ENCODE measurements at regions of chr14 and their contacts with region 1.

Region 1: DNA sequence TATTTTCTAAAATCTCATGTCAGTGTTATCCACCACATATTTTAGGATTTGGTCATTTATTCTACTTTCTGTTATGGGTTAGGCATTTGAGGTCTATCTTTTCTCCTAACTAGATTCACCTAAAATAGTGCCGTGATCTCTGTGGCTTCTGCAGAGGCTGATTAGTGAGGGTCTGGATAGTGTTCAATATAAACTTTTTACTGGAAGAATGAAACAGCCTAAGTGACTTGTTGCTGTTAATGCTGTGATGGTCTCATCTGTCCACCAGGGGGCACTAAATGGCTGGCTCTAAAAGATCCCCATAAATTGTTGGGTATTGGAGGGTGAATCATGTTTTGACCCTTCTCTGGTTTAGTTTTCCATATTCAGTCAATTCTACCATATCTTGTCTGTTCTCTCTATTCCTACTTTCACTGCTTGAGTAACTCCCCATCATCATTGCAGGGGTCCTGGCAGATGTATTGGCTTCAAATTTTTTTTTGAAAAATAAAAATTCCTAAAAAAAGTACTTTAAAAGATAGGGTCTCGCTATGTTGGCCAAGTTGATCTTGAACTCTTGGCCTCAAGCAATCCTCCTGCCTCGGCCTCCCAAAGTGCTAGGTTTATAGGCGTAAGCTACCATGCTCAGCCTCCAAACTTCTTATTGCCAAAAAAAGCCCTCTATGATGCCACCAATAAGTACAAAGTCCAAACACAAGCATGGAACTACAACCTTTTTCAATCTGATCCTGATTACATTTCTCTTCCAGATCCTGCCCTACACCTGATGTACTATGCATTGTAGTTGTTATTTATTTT is 6.9 kb downstream of the PABPN1 start:
- H3K4me3 ChIP-seq: no peak overlapping the region
- H3K27ac ChIP-seq: no peak overlapping the region
- H3K4me1 ChIP-seq: peaks cover 4% of the 10 kb centered on the region; the same call in 1 of the 2 replicates
- CTCF ChIP-seq: peak; percentile 49

Region 2: GRCh38 chr14:23245282-23245681 is 82.9 kb before region 1 on chr14:
- CTCF ChIA-PET with region 1: no interaction called
- POLR2A ChIA-PET with region 1: no interaction called
- H3K4me3 ChIP-seq: no peak overlapping the region
- H3K27ac ChIP-seq: no peak overlapping the region
- H3K4me1 ChIP-seq: no peaks in the 10 kb centered on the region
- CTCF ChIP-seq: no peak

Region 3: GRCh38 chr14:23301288-23301968 is 26.7 kb before region 1 on chr14:
- CTCF ChIA-PET with region 1: interaction called, 3 read pairs
- POLR2A ChIA-PET with region 1: interaction called, 12 read pairs
- H3K4me3 ChIP-seq: peak overlapping the region; percentile 66
- H3K27ac ChIP-seq: peak overlapping the region; percentile 97
- H3K4me1 ChIP-seq: peaks cover 13% of the 10 kb centered on the region; the same call in 1 of the 2 replicates
- CTCF ChIP-seq: peak; percentile 61; the same call in 1 of the 2 replicates

Region 4: GRCh38 chr14:23306410-23307145 is 21.6 kb before region 1 on chr14 and contains the start of gene BCL2L2:
- CTCF ChIA-PET with region 1: interaction called, 3 read pairs
- POLR2A ChIA-PET with region 1: interaction called, 12 read pairs
- H3K4me3 ChIP-seq: peak within 1 kb of the TSS; percentile 56
- H3K27ac ChIP-seq: peak within 1 kb of the TSS; percentile 85
- H3K4me1 ChIP-seq: peaks cover 6% of the 10 kb centered on the region; the same call in 1 of the 2 replicates
- CTCF ChIP-seq: no peak

Region 5: DNA sequence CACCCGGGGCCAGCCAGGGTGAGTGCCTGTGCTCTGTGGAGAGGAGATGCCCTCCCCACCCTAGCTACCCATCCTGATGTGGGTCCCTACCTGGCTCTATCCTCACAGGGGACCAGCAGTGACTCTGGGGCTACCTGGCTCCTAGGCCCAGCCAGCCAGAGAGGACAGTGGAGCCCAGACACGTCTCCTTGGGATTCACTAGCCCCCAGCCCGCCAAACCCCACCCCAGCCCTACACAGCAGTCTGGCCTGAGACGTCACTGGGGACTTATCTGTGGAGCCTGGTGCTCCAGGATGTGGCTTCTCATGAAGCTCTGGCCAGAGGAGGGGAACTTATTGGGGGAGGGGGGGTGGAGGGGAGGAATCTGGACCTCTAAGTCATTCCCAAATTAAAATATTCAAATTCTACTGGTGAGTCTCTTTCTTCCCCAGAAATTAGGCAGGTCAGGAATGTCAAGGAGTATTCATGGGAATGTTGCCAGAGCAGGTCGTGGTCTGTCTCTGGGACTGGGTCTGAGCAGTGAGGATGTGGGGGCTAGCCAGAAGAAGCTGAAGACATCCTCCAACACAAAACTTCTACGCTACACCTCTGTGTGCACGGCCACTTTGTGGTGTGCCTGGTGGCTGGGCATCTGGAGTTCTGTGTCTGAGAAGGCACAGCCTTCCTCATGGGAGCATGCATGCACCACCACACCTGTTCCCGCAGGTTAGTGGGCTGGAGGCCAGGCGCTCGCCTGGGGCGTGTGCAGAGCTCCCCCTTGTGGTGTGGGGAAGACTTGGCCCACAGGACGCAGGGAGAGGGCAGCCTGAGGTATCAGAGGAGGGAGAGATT is 51.4 kb after region 1 on chr14:
- CTCF ChIA-PET with region 1: interaction called, 61 read pairs
- POLR2A ChIA-PET with region 1: interaction called, 12 read pairs
- H3K4me3 ChIP-seq: no peak overlapping the region
- H3K27ac ChIP-seq: no peak overlapping the region
- H3K4me1 ChIP-seq: no peaks in the 10 kb centered on the region
- CTCF ChIP-seq: peak; percentile 81

Measured in HEK293 (cell line).